Posterior vena cava (tissue), 2 donors: ENCODE measurements at regions of chr16 and their contacts with region 1.

Region 1: GRCh38 chr16:75789237-75789636 is 62.9 kb upstream of the CPHXL start:
- DNase-seq: no peak

Region 2: GRCh38 chr16:77171745-77172635 is 1382.8 kb after region 1 on chr16:
- intact Hi-C with region 1: loop called in 1 of 2 experiments (anchors 10 kb)
- DNase-seq: no peak